Ascending aorta (tissue), 2 donors: ENCODE measurements at regions of chr10 and their contacts with region 1.

Region 1: GRCh38 chr10:119803264-119803663 is 69.4 kb downstream of the MCMBP start:
- DNase-seq: no peak
- H3K4me3 ChIP-seq: no peak overlapping the region
- H3K27ac ChIP-seq: no peak overlapping the region
- H3K4me1 ChIP-seq: peaks cover 0 to 12% of the 10 kb centered on the region in 2 donors
- H3K27me3 ChIP-seq: no peaks in the 10 kb centered on the region
- CTCF ChIP-seq: no peak

Region 2: GRCh38 chr10:119496273-119496672 is 307.0 kb before region 1 on chr10:
- intact Hi-C with region 1: no loop called
- DNase-seq: no peak
- H3K4me3 ChIP-seq: no peak overlapping the region
- H3K27ac ChIP-seq: no peak overlapping the region
- H3K4me1 ChIP-seq: no peaks in the 10 kb centered on the region
- H3K27me3 ChIP-seq: no peaks in the 10 kb centered on the region
- CTCF ChIP-seq: no peak

Region 3: GRCh38 chr10:119680050-119680449 is 123.2 kb before region 1 on chr10:
- intact Hi-C with region 1: no loop called
- DNase-seq: peak in 1 of 2 donors; percentile 79
- H3K4me3 ChIP-seq: no peak overlapping the region
- H3K27ac ChIP-seq: peak overlapping the region; percentile 84 to 89
- H3K4me1 ChIP-seq: peaks cover 16 to 41% of the 10 kb centered on the region in 2 donors
- H3K27me3 ChIP-seq: no peaks in the 10 kb centered on the region
- CTCF ChIP-seq: no peak

Region 4: DNA sequence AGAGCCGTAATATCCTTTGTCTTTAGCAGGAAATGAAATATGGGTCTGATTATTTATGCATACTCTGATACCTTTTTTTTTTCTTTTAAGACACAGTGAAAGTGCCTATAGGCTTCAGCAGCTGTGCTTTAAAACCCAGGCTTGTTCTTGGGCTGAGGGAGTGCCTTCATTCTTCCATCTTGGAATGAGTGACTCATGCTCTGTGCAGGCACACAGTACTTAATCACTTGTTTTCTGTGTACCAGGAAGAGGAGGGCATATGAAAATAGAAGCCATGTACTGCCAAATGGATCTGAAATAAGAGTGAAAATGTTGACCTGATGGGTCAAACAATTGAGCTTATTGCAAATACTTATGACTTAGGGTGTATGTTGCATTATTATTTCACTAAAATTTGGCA is 65.4 kb before region 1 on chr10:
- intact Hi-C with region 1: no loop called
- DNase-seq: peak in 1 of 2 donors; percentile 70
- H3K4me3 ChIP-seq: no peak overlapping the region
- H3K27ac ChIP-seq: peak overlapping the region; percentile 26 to 42
- H3K4me1 ChIP-seq: peaks cover 0 to 18% of the 10 kb centered on the region in 2 donors
- H3K27me3 ChIP-seq: no peaks in the 10 kb centered on the region
- CTCF ChIP-seq: no peak

Region 5: DNA sequence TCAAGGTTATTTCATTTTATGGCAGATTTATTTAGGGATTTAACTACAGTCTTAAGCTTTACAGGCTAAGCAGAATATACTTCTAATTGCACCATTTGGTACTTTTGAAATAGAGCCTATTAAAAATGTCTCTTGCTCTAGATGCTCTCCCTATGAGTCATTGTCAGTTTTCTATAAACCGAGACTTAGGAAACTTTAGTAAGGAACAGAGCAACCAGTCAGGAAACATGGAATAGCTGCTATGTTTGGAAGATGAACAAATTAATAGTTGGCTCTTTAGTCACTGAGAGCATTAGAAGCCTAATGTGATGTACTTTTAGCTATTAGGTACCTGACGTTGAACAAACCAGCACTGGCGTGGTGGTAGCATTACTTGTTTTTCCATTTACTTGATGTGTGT is 42.2 kb before region 1 on chr10:
- intact Hi-C with region 1: loop called (anchors 5 kb)
- DNase-seq: no peak
- H3K4me3 ChIP-seq: no peak overlapping the region
- H3K27ac ChIP-seq: peak overlapping the region; percentile 27 to 64
- H3K4me1 ChIP-seq: no peaks in the 10 kb centered on the region
- H3K27me3 ChIP-seq: no peaks in the 10 kb centered on the region
- CTCF ChIP-seq: no peak

Region 6: GRCh38 chr10:119776536-119776935 is 26.7 kb before region 1 on chr10:
- intact Hi-C with region 1: no loop called
- DNase-seq: no peak
- H3K4me3 ChIP-seq: no peak overlapping the region
- H3K27ac ChIP-seq: no peak overlapping the region
- H3K4me1 ChIP-seq: no peaks in the 10 kb centered on the region
- H3K27me3 ChIP-seq: no peaks in the 10 kb centered on the region
- CTCF ChIP-seq: no peak